ENCODE measurements at regions of chr7 and their contacts with region 1.

Region 1: GRCh38 chr7:134831862-134832261 is 52.4 kb downstream of the CALD1 start:
- DNase-seq: peak in 1 of 2 donors; percentile 27
- ATAC-seq: no peak
- H3K4me3 ChIP-seq: no peak overlapping the region
- H3K27ac ChIP-seq: peak overlapping the region in 3 of 4 donors; percentile 50 to 62 (median 56)
- H3K4me1 ChIP-seq: no peaks in the 10 kb centered on the region
- H3K27me3 ChIP-seq: no peaks in the 10 kb centered on the region
- CTCF ChIP-seq: no peak
- POLR2A ChIP-seq: no peak

Region 2: DNA sequence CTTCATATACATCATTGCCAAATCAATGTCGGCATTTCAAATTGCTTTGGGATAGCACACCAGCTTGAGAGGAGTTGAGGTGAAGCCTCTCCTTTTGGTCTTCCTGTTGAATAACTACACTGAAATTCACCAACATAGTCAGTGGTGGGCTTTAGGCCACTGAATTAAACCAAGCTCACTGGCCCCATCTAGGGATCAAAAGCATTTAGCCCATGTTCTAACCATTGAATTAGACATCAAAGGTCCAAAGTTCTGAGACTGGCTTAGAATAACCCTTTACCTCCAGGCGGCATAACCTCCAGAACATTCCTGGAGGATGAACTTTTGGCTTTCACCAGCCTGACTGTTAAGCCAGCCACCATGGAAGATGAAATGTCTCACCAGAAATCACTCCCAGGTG is 130.6 kb before region 1 on chr7:
- in situ Hi-C with region 1: no loop called
- intact Hi-C with region 1: loop called (anchors 10 kb)
- DNase-seq: no peak
- ATAC-seq: no peak
- H3K4me3 ChIP-seq: no peak overlapping the region
- H3K27ac ChIP-seq: no peak overlapping the region
- H3K4me1 ChIP-seq: no peaks in the 10 kb centered on the region
- H3K27me3 ChIP-seq: no peaks in the 10 kb centered on the region
- CTCF ChIP-seq: peak in 1 of 5 experiments; percentile 20
- POLR2A ChIP-seq: no peak